Activated B cell treated with CpG ODN at 0.5 μM for 24 hours (primary cell): ENCODE measurements at regions of chr19 and their contacts with region 1.

Region 1: DNA sequence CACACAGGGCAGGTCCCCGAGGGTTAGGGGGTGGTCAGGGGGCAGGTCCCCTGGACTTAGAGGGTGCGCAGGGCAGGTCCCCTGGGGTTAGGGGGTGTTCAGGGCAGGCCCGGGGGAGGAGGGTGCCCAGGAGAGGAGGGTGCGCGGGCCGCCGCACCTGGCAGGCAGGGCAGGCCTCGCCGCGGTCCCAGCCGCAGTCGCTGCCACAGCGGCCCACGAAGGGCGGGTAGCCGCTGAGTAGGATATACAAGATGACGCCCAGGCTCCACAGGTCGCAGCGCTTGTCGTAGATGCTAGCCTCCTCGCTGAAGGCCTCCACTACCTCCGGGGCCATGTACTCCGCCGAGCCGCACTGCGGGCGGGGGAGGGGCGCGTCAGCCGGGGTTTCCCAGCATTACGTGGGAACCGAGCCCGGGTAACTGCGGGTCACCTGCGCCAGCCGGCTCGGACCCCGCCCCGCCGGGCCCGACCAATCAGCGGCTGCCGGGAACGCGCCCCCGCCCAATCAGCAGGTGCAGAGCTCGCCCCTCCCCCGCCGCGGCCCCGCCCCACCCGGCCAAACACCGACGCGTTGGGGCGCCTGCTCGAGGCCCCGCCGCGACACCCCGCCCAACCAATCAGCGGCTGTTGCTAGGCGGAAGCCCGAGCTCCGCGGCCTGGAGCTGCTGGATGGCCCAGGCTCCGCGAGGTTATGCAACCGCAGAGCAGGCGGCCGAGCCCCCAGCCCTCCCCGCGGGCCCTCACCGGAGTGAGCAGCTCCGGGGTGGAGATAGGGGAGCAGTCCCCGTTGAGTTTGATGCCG is 9.2 kb downstream of the MKNK2 start:
- DNase-seq: peak; percentile 96
- ATAC-seq: peak; percentile 69
- H3K4me3 Mint-ChIP-seq: peak overlapping the region; percentile 61
- H3K27ac Mint-ChIP-seq: peak overlapping the region; percentile 81
- H3K4me1 Mint-ChIP-seq: peaks cover 70% of the 10 kb centered on the region
- H3K27me3 Mint-ChIP-seq: no peaks in the 10 kb centered on the region
- CTCF ChIP-seq: no peak

Region 2: DNA sequence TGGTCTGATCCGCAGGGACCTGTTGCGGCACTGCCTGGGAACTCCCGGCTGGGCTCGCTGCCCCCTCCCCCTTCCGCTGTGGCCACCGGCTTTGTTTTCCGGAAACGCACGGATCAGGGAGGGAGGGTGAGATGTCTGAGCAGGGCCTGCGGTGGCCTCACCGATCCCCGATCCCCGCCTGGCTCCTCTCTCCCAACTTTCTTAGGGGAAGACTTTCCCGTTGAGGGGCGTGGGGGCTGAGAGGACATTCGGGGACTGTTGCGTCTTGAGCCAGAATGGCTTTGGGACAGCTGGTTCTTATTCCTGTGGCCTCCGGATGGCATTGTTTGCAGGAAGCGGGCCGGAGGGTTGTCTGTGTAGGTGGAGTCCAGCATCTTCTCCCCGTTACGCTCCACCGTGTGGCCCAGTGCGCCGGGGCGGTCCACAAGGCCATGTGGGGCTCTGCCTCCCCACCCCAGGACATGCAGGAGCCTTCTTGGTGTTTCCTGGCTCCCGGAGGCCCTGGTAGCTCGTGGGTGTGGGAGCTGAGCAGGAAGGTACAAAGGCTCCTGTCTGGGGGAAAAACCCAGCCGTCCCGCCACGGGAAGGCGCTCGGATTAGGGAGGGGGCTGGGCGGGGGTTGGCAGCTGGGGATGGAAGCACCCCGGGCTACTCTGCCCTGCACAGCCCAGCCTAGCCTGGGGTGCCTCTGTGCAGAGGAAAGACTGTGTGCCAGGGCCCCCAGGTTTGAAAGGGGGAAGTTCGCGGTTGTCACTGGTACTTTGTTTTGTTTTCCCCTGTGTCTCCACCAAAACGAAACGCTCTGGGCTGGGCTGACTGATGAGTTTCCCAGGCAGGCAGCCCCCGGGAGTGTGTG is 99.6 kb before region 1 on chr19:
- CTCF ChIA-PET with region 1: interaction called, 3 read pairs
- POLR2A ChIA-PET with region 1: interaction called, 8 read pairs
- intact Hi-C with region 1: loop called (anchors 1 kb)
- DNase-seq: peak; percentile 69
- ATAC-seq: peak; percentile 53
- H3K4me3 Mint-ChIP-seq: peak overlapping the region; percentile 91
- H3K27ac Mint-ChIP-seq: peak overlapping the region; percentile 96
- H3K4me1 Mint-ChIP-seq: peaks cover 46% of the 10 kb centered on the region
- H3K27me3 Mint-ChIP-seq: no peaks in the 10 kb centered on the region
- CTCF ChIP-seq: no peak

Region 3: DNA sequence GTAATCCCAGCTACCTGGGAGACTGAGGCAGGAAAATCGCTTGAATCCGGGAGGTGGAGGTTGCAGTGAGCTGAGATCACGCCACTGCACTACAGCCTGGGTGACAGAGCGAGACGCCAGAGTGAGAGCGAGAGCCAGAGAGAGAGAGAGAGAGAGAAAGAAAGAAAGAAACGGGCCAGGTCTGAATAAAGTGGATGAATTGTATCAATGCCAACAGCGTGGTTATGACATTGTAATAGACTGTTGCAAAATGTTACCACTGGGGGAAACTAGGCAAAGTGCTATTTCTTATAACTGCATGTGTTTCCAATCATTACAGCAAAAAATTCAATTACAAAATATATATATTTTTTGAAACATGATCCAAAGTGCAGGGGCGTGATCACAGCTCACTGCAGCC is 14.5 kb before region 1 on chr19:
- CTCF ChIA-PET with region 1: interaction called, 4 read pairs
- POLR2A ChIA-PET with region 1: interaction called, 490 read pairs
- intact Hi-C with region 1: no loop called
- DNase-seq: no peak
- ATAC-seq: no peak
- H3K4me3 Mint-ChIP-seq: no peak overlapping the region
- H3K27ac Mint-ChIP-seq: no peak overlapping the region
- H3K4me1 Mint-ChIP-seq: peaks cover 8% of the 10 kb centered on the region
- H3K27me3 Mint-ChIP-seq: no peaks in the 10 kb centered on the region
- CTCF ChIP-seq: no peak

Region 4: GRCh38 chr19:2061495-2062381 is 19.9 kb after region 1 on chr19:
- CTCF ChIA-PET with region 1: no interaction called
- POLR2A ChIA-PET with region 1: interaction called, 2,723 read pairs
- intact Hi-C with region 1: no loop called
- DNase-seq: peak; percentile 100
- ATAC-seq: peak; percentile 90
- H3K4me3 Mint-ChIP-seq: peak overlapping the region; percentile 87
- H3K27ac Mint-ChIP-seq: peak overlapping the region; percentile 88
- H3K4me1 Mint-ChIP-seq: peaks cover 48% of the 10 kb centered on the region
- H3K27me3 Mint-ChIP-seq: no peaks in the 10 kb centered on the region
- CTCF ChIP-seq: no peak

Region 5: DNA sequence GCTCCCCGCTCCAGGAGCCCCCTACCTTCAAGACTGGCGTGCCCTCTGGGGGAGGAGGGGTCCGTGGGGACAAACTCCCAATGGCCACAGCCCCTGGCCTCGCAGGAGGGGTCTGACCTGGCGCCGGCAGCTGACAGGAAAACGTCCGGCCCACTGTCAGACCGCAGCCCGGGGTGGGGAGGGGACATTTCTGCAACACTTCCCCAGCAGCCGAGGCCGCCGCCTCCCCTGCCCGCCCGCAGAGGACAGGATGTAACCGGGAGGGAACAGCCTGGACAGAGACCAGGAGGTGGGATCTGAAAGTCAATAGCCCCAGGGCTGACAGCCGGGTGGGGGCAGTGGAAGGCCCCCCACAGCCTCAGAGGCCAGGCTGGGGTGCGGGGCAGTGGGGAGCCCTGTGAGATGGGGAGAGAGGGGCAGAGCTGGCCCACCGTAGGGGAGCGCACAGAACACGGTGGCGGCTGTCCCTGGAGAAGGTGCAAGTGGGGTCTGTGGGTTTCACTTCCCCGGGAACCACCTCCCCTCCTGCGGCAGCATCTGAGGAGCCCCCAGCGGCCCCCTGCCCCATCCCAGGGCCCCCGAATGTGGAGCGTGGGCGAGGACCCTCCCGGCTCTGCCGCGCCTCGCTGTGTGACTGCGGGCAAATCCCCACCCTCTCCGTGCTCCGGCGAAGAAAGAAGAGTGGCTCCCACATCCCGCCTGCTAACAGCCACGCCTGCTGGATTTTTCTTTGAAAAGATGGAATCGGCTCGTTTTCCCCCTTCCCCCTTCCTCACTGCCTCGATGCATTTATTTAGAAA is 240.4 kb after region 1 on chr19 and contains the start of gene PEAK3:
- CTCF ChIA-PET with region 1: no interaction called
- POLR2A ChIA-PET with region 1: interaction called, 11 read pairs
- intact Hi-C with region 1: no loop called
- DNase-seq: peak; percentile 46
- ATAC-seq: peak; percentile 60
- H3K4me3 Mint-ChIP-seq: peak within 1 kb of the TSS; percentile 60
- H3K27ac Mint-ChIP-seq: peak within 1 kb of the TSS; percentile 24
- H3K4me1 Mint-ChIP-seq: peaks cover 33% of the 10 kb centered on the region
- H3K27me3 Mint-ChIP-seq: no peaks in the 10 kb centered on the region
- CTCF ChIP-seq: no peak
- total RNA-seq, gene PEAK3: 0.09 TPM in 1 of 2 replicates, not detected in the other